Endothelial cell of umbilical vein (primary cell): ENCODE measurements at regions of chr17 and their contacts with region 1.

Region 1: GRCh38 chr17:47335101-47335936 is 11.6 kb downstream of the EFCAB13 start:
- DNase-seq: peak; percentile 79
- H3K4me3 ChIP-seq: peak overlapping the region in 1 of 3 experiments; percentile 24
- H3K27ac ChIP-seq: peak overlapping the region; percentile 72
- H3K4me1 ChIP-seq: peaks cover 31% of the 10 kb centered on the region
- H3K27me3 ChIP-seq: no peaks in the 10 kb centered on the region
- CTCF ChIP-seq: no peak
- POLR2A ChIP-seq: no peak

Region 2: DNA sequence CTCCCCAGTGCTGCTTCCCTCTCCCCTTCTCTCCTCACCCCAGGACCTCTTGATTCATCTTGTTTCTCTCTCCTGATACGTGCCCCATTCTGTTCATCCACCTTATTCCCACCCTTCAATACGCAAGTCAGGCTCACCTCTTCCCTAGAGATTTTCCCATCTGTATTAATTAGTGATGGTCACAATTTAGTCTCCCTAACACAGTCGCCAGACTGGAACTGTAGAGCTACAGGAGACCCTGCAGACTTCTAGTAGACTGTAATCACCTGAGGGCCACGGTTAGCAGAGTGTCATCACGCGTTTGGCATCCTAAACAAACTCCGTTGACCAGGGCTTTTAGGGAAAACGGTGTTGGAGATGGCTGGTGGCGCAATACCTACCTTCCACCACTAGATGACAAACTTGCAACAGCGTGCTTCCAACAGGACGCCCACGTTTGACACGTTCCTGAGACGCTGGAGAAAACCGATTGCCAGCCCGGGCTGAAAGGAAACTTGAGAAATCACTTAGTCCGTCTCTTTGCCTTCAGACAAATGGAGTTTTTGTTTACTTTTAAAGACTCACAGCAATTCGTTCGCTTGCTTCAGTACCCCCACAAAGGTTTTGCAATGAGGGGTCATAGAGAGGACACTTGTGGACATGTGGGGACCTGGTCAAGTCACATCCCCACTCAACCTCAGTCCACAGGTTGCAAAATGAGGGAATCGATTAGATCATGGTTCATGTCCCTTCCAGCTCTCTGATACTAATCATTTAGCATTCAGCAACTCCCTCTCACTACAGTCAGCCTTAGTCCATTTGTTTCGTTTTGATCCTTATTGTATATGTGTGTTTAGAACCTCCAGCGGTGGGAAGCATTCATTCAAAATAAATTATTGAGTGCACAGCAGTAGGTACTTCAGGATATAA is 105.5 kb before region 1 on chr17:
- CTCF ChIA-PET with region 1: no interaction called
- POLR2A ChIA-PET with region 1: no interaction called
- dilution Hi-C with region 1: no loop called
- intact Hi-C with region 1: no loop called
- DNase-seq: peak; percentile 93
- H3K4me3 ChIP-seq: no peak overlapping the region
- H3K27ac ChIP-seq: peak overlapping the region; percentile 38
- H3K4me1 ChIP-seq: peaks cover 30% of the 10 kb centered on the region
- H3K27me3 ChIP-seq: no peaks in the 10 kb centered on the region
- CTCF ChIP-seq: peak; percentile 98 to 99
- POLR2A ChIP-seq: peak; percentile 55

Region 3: GRCh38 chr17:47323382-47324222 is 11.7 kb before region 1 on chr17 and contains the start of gene EFCAB13:
- CTCF ChIA-PET with region 1: interaction called, 14 read pairs
- POLR2A ChIA-PET with region 1: no interaction called
- dilution Hi-C with region 1: no loop called
- intact Hi-C with region 1: no loop called
- DNase-seq: peak; percentile 94
- H3K4me3 ChIP-seq: peak within 1 kb of the TSS; percentile 71 to 89 (median 73)
- H3K27ac ChIP-seq: peak within 1 kb of the TSS; percentile 53
- H3K4me1 ChIP-seq: peaks cover 15% of the 10 kb centered on the region
- H3K27me3 ChIP-seq: no peaks in the 10 kb centered on the region
- CTCF ChIP-seq: peak in 1 of 2 donors; percentile 13
- POLR2A ChIP-seq: peak; percentile 95
- total RNA-seq, gene EFCAB13: 8.3 and 12.9 TPM in 2 replicates